ENCODE measurements at regions of chr16 and their contacts with region 1.

Region 1: GRCh38 chr16:11851294-11852091 is at the start of gene RSL1D1:
- DNase-seq: peak; percentile 93
- H3K4me3 Mint-ChIP-seq: peak within 1 kb of the TSS; percentile 98
- H3K27ac Mint-ChIP-seq: peak within 1 kb of the TSS; percentile 90
- H3K4me1 Mint-ChIP-seq: peaks cover 61% of the 10 kb centered on the region
- H3K27me3 Mint-ChIP-seq: no peaks in the 10 kb centered on the region
- total RNA-seq, gene RSL1D1: 354 to 365 TPM

Region 2: GRCh38 chr16:11667824-11668622 is 183.5 kb before region 1 on chr16 and contains the start of gene SNN:
- CTCF ChIA-PET with region 1: no interaction called
- intact Hi-C with region 1: loop called (anchors 1 kb)
- DNase-seq: peak; percentile 89
- H3K4me3 Mint-ChIP-seq: peak within 1 kb of the TSS; percentile 72
- H3K27ac Mint-ChIP-seq: no peak within 1 kb of the TSS
- H3K4me1 Mint-ChIP-seq: peaks cover 71% of the 10 kb centered on the region
- H3K27me3 Mint-ChIP-seq: no peaks in the 10 kb centered on the region
- total RNA-seq, gene SNN: 12.0 to 13.6 TPM

Region 3: DNA sequence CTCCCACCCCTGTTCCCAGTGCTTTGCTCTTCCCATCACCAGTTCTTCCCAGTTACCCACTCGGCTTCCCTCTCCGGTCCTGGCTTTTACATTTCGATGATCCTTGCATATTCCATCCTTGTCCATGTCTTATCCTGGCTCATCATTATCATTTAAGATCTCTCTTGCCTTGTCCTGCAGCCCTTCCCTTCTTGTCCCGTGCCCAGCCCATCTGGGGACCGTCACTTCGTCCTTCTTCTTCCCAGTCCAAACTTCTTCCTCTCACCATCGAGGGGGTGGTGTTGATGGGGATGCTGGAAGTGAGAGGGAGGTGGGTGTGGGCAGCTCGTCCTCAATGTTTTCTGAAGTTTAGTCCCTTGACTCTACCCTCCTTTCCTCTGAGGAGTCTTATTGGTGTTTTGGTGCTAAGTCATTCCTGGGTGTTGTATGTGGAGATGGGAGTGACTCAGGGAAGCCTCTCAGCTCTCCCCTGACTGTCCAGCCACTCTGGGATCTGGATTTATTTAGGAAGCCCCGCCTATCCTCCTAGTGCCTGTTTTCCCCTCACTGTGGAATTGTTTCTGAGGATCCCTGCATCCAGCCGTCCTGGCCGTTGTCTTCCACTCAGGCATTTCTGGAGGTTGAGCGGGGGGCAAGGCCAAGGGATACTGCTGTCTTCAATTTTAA is 126.0 kb after region 1 on chr16:
- CTCF ChIA-PET with region 1: no interaction called
- intact Hi-C with region 1: loop called (anchors 1 kb)
- DNase-seq: no peak
- H3K4me3 Mint-ChIP-seq: peak overlapping the region; percentile 96
- H3K27ac Mint-ChIP-seq: no peak overlapping the region
- H3K4me1 Mint-ChIP-seq: peaks cover 34% of the 10 kb centered on the region
- H3K27me3 Mint-ChIP-seq: no peaks in the 10 kb centered on the region